CD8-positive, alpha-beta T cell (primary cell): ENCODE measurements at regions of chr3 and their contacts with region 1.

Region 1: GRCh38 chr3:53072653-53073552 is 27.0 kb upstream of the SFMBT1 start:
- DNase-seq: peak; percentile 74 to 92 (median 89)
- ATAC-seq: peak; percentile 89
- H3K4me3 ChIP-seq: peak overlapping the region; percentile 72 to 86
- H3K4me3 Mint-ChIP-seq: peak overlapping the region; percentile 89
- H3K27ac ChIP-seq: peak overlapping the region; percentile 65 to 79
- H3K27ac Mint-ChIP-seq: peak overlapping the region; percentile 95
- H3K4me1 ChIP-seq: peaks cover 16% of the 10 kb centered on the region
- H3K4me1 Mint-ChIP-seq: peaks cover 17% of the 10 kb centered on the region
- H3K27me3 ChIP-seq: no peaks in the 10 kb centered on the region
- H3K27me3 Mint-ChIP-seq: no peaks in the 10 kb centered on the region
- CTCF ChIP-seq: peak; percentile 78

Region 2: DNA sequence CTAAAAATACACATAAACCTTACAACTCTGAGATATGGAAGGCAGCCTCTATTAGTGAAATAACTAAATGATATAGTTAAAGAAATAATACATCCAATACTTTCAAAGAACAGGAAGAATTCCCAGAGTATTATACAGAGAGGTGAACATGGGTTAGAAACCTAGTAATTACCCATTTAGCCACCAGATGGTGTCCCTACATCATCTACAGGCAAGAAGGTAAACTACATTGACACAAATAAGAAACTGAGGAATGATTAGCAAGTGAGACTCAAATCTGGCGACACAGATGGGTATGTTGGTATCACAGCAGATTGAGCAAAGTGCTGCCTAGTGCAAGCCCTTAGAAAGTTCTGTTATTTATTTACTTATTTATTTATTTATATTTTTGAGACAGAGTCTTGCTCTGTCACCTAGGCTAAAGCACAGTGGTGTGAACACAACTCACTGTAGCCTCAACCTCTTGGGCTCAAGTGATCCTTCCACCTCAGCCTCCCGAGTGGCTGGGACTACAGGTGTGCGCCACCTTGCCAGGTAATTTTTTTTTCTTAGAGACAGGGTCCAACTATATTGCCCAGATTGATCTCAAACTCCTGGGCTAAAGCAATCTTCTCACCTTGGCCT is 330.4 kb before region 1 on chr3:
- CTCF ChIA-PET with region 1: interaction called, 5 read pairs
- POLR2A ChIA-PET with region 1: no interaction called
- intact Hi-C with region 1: loop called in 1 of 2 experiments (anchors 1 kb)
- DNase-seq: peak in 2 of 9 experiments; percentile 48 to 58
- ATAC-seq: no peak
- H3K4me3 ChIP-seq: no peak overlapping the region
- H3K4me3 Mint-ChIP-seq: no peak overlapping the region
- H3K27ac ChIP-seq: no peak overlapping the region
- H3K27ac Mint-ChIP-seq: no peak overlapping the region
- H3K4me1 ChIP-seq: no peaks in the 10 kb centered on the region
- H3K4me1 Mint-ChIP-seq: no peaks in the 10 kb centered on the region
- H3K27me3 ChIP-seq: no peaks in the 10 kb centered on the region
- H3K27me3 Mint-ChIP-seq: no peaks in the 10 kb centered on the region
- CTCF ChIP-seq: peak; percentile 55

Region 3: GRCh38 chr3:52845691-52846431 is 227.0 kb before region 1 on chr3:
- CTCF ChIA-PET with region 1: interaction called, 4 read pairs
- POLR2A ChIA-PET with region 1: no interaction called
- intact Hi-C with region 1: loop called (anchors 1 kb)
- DNase-seq: peak in 5 of 9 experiments; percentile 28 to 40 (median 34)
- ATAC-seq: peak; percentile 49
- H3K4me3 ChIP-seq: no peak overlapping the region
- H3K4me3 Mint-ChIP-seq: no peak overlapping the region
- H3K27ac ChIP-seq: no peak overlapping the region
- H3K27ac Mint-ChIP-seq: no peak overlapping the region
- H3K4me1 ChIP-seq: no peaks in the 10 kb centered on the region
- H3K4me1 Mint-ChIP-seq: no peaks in the 10 kb centered on the region
- H3K27me3 ChIP-seq: no peaks in the 10 kb centered on the region
- H3K27me3 Mint-ChIP-seq: no peaks in the 10 kb centered on the region
- CTCF ChIP-seq: peak; percentile 46

Region 4: DNA sequence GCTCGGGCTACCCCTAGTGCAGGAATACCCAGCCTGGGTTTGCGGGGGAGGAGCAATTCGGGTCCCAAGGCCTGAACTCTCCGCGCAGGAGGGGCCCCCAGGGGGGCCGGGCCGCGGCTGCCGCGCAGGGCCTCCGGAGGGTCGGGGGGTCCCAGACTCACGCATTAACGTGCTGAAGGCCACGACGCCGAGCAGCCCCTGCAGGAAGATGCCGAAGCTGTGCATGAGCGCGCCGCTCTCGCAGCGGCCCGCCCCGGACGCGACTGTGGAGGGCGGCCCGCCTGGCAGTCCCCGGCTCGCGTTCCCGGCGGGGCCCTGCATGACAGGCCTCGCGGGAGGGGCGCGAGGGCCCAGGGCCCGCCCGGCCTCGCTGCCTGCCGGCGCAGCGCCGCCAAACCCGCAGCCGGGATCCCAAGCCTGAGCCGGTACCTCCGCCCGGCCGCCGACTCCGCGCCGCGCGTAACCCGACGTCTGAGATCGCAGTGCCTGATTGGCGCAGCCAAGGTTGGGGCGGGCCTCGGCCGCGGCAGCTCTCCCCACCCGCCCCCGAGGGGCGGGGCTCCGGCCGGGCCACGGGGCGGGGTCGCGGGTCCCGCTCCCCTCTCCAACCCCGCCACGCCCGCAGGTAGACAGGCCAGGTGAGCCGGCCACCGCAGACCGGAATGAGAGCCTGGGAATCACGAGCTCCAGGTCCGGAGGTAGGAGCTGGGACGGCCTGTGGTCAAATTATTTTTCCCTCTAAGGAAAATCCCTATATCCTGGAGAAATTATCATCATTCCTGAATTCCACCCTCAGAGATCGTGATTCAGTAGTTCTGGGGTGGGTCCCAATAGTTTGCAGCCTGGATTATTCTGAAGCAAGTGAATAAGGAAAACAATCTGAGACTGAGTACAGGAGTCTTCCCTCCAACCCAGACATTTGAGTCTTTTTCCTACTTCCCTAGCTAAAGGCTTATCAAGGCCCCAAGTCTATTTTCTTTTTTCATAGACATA is 175.5 kb before region 1 on chr3 and contains the start of gene STIMATE:
- CTCF ChIA-PET with region 1: no interaction called
- POLR2A ChIA-PET with region 1: no interaction called
- intact Hi-C with region 1: loop called (anchors 1 kb)
- DNase-seq: peak; percentile 71 to 94 (median 86)
- ATAC-seq: peak; percentile 93
- H3K4me3 ChIP-seq: peak within 1 kb of the TSS; percentile 70 to 85
- H3K4me3 Mint-ChIP-seq: peak within 1 kb of the TSS; percentile 90
- H3K27ac ChIP-seq: peak within 1 kb of the TSS; percentile 23 to 49
- H3K27ac Mint-ChIP-seq: peak within 1 kb of the TSS; percentile 80
- H3K4me1 ChIP-seq: peaks cover 22% of the 10 kb centered on the region
- H3K4me1 Mint-ChIP-seq: peaks cover 48% of the 10 kb centered on the region
- H3K27me3 ChIP-seq: no peaks in the 10 kb centered on the region
- H3K27me3 Mint-ChIP-seq: no peaks in the 10 kb centered on the region
- CTCF ChIP-seq: no peak
- total RNA-seq, gene STIMATE: 29.1 to 35.9 TPM

Region 5: GRCh38 chr3:52934630-52935530 is 138.0 kb before region 1 on chr3:
- CTCF ChIA-PET with region 1: interaction called, 36 read pairs
- POLR2A ChIA-PET with region 1: no interaction called
- intact Hi-C with region 1: loop called (anchors 1 kb)
- DNase-seq: peak; percentile 16 to 76 (median 54)
- ATAC-seq: peak; percentile 97
- H3K4me3 ChIP-seq: no peak overlapping the region
- H3K4me3 Mint-ChIP-seq: no peak overlapping the region
- H3K27ac ChIP-seq: no peak overlapping the region
- H3K27ac Mint-ChIP-seq: no peak overlapping the region
- H3K4me1 ChIP-seq: peaks cover 5% of the 10 kb centered on the region
- H3K4me1 Mint-ChIP-seq: peaks cover 8% of the 10 kb centered on the region
- H3K27me3 ChIP-seq: no peaks in the 10 kb centered on the region
- H3K27me3 Mint-ChIP-seq: no peaks in the 10 kb centered on the region
- CTCF ChIP-seq: peak; percentile 81

Region 6: DNA sequence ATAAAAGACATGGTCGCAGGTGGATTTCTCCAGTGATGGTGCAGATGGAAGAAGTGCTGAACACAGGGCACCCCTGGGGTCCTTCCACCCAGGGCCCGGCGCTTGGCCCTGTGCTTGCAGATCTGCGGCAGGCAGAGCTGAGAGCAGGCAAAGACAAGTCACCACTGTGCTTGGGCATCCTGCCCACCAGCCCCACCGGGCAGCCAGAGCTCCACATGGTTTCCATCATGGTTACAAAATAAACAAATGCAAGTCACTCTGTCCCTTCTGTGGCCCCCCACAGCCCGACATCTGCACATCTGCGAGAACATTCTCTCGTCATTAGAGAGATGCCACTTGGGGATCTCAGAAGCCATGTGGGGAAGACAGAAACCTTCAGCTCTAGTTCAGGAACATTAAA is 10.6 kb after region 1 on chr3:
- CTCF ChIA-PET with region 1: interaction called, 19 read pairs
- POLR2A ChIA-PET with region 1: no interaction called
- intact Hi-C with region 1: no loop called
- DNase-seq: no peak
- ATAC-seq: no peak
- H3K4me3 ChIP-seq: no peak overlapping the region
- H3K4me3 Mint-ChIP-seq: no peak overlapping the region
- H3K27ac ChIP-seq: no peak overlapping the region
- H3K27ac Mint-ChIP-seq: peak overlapping the region; percentile 60
- H3K4me1 ChIP-seq: no peaks in the 10 kb centered on the region
- H3K4me1 Mint-ChIP-seq: no peaks in the 10 kb centered on the region
- H3K27me3 ChIP-seq: no peaks in the 10 kb centered on the region
- H3K27me3 Mint-ChIP-seq: no peaks in the 10 kb centered on the region
- CTCF ChIP-seq: no peak

Region 7: GRCh38 chr3:53956586-53956985 is 883.7 kb after region 1 on chr3:
- CTCF ChIA-PET with region 1: no interaction called
- POLR2A ChIA-PET with region 1: no interaction called
- intact Hi-C with region 1: no loop called
- DNase-seq: no peak
- ATAC-seq: no peak
- H3K4me3 ChIP-seq: no peak overlapping the region
- H3K4me3 Mint-ChIP-seq: no peak overlapping the region
- H3K27ac ChIP-seq: no peak overlapping the region
- H3K27ac Mint-ChIP-seq: no peak overlapping the region
- H3K4me1 ChIP-seq: no peaks in the 10 kb centered on the region
- H3K4me1 Mint-ChIP-seq: no peaks in the 10 kb centered on the region
- H3K27me3 ChIP-seq: no peaks in the 10 kb centered on the region
- H3K27me3 Mint-ChIP-seq: peaks cover 15% of the 10 kb centered on the region
- CTCF ChIP-seq: no peak